ENCODE measurements at regions of chr12 and their contacts with region 1.

Region 1: GRCh38 chr12:124767066-124767821 is 96.4 kb downstream of the SCARB1 start:
- DNase-seq: peak; percentile 79 to 93 (median 93)
- ATAC-seq: peak; percentile 76 to 80
- H3K4me3 ChIP-seq: no peak overlapping the region
- H3K27ac ChIP-seq: no peak overlapping the region
- H3K4me1 ChIP-seq: peaks cover 12% of the 10 kb centered on the region
- H3K27me3 ChIP-seq: no peaks in the 10 kb centered on the region

Region 2: DNA sequence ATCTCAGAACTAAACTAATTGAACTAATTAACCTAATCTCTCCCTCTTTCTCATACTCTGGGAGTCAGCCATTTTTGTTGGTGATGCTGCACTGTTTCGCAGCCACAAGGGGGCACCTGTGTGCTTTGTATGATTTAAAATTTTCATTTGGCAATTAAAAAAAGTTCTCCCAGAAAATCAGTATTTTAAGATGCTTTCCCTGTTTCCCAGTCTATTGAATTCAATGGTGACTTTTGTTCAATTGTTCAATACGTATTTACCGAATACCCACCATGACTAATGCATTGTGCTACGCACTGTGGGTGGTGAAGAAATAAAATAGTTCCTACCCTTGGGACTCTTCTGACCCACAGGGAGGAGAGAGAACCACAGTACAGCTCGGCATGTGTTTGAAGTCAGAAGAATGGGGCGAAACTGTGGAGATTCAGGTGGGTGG is 730.6 kb before region 1 on chr12:
- intact Hi-C with region 1: loop called in 3 of 4 experiments (anchors 5 kb)
- DNase-seq: peak; percentile 39 to 72 (median 68)
- ATAC-seq: peak in 1 of 2 donors; percentile 56
- H3K4me3 ChIP-seq: no peak overlapping the region
- H3K27ac ChIP-seq: no peak overlapping the region
- H3K4me1 ChIP-seq: no peaks in the 10 kb centered on the region
- H3K27me3 ChIP-seq: no peaks in the 10 kb centered on the region

Region 3: DNA sequence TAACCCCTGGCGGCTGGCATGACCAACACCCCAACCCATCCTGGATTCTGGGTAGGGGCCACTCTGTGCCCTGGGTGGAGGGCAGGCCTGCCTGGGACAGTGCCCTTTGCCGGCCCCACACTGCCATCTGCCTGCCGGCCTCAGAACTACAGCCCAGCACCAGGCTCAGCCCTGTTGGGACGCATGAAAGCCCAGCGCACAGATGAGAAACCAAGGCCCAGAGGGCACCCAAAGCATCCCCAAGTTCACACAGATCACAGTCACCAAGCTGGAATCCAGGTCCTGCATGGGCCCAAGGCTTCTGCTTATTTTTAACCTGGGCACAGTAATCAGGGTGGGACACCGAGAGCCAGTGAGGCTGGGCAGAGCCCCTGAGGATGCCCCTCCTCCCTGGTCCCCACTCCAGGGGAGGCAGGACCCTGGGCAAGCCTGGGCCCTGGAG is 446.2 kb before region 1 on chr12:
- intact Hi-C with region 1: loop called in 1 of 4 experiments (anchors 10 kb)
- DNase-seq: peak; percentile 68 to 89 (median 89)
- ATAC-seq: peak; percentile 75 to 82
- H3K4me3 ChIP-seq: no peak overlapping the region
- H3K27ac ChIP-seq: no peak overlapping the region
- H3K4me1 ChIP-seq: no peaks in the 10 kb centered on the region
- H3K27me3 ChIP-seq: no peaks in the 10 kb centered on the region

Region 4: GRCh38 chr12:124359671-124360581 is 407.3 kb before region 1 on chr12:
- intact Hi-C with region 1: loop called in 1 of 4 experiments (anchors 10 kb)
- DNase-seq: peak; percentile 94 to 99 (median 98)
- ATAC-seq: peak; percentile 83 to 93
- H3K4me3 ChIP-seq: no peak overlapping the region
- H3K27ac ChIP-seq: peak overlapping the region; percentile 1
- H3K4me1 ChIP-seq: peaks cover 17% of the 10 kb centered on the region
- H3K27me3 ChIP-seq: no peaks in the 10 kb centered on the region

Region 5: GRCh38 chr12:124433147-124433874 is 333.9 kb before region 1 on chr12:
- intact Hi-C with region 1: loop called in 1 of 4 experiments (anchors 10 kb)
- DNase-seq: peak; percentile 81 to 94 (median 93)
- ATAC-seq: peak; percentile 63 to 81
- H3K4me3 ChIP-seq: no peak overlapping the region
- H3K27ac ChIP-seq: peak overlapping the region; percentile 60
- H3K4me1 ChIP-seq: peaks cover 2% of the 10 kb centered on the region
- H3K27me3 ChIP-seq: no peaks in the 10 kb centered on the region

Region 6: GRCh38 chr12:124453419-124454351 is 313.6 kb before region 1 on chr12:
- intact Hi-C with region 1: no loop called
- DNase-seq: peak; percentile 92 to 94 (median 93)
- ATAC-seq: peak; percentile 78 to 87
- H3K4me3 ChIP-seq: no peak overlapping the region
- H3K27ac ChIP-seq: peak overlapping the region; percentile 83
- H3K4me1 ChIP-seq: peaks cover 25% of the 10 kb centered on the region
- H3K27me3 ChIP-seq: no peaks in the 10 kb centered on the region

Region 7: DNA sequence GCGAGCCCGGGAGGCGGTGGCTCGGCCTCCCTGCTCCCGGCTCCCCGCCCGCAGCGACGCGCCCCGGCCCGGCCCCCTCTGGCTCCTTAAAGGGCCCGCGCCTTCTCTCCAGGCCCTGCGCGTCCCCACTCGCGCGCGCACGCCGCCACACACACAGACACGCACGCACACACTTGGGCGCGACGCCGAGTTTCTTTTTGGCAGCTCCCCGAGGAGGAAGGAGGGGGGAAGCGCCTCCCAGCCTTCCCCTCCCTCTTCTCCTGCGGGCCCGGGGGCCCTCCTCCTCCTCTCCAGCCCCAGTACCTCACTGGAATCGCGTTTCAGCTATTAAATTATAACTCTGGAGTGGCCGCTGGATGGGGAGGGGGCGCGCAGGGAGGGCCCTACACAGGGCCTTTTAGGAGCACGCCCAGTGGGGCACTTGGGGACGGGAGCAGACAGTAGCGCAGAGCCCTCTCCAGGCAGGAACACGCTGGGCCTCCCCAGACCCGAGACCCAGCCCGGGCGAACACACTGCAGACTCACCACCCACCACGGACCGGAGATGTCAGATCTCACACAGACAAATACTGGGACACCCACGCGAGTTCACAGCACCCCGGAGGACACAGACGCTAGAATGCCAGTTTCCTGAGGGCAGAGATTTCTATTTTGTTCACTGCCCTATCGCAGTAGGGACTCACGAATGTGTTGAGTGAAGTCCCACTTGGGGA is 199.4 kb before region 1 on chr12:
- intact Hi-C with region 1: loop called (anchors 5 to 10 kb)
- DNase-seq: peak; percentile 97 to 99 (median 99)
- ATAC-seq: peak; percentile 89 to 90
- H3K4me3 ChIP-seq: peak overlapping the region; percentile 84
- H3K27ac ChIP-seq: peak overlapping the region; percentile 71
- H3K4me1 ChIP-seq: peaks cover 11% of the 10 kb centered on the region
- H3K27me3 ChIP-seq: no peaks in the 10 kb centered on the region